ENCODE measurements at regions of chr22 and their contacts with region 1.

Region 1: GRCh38 chr22:38751422-38752346 is 4.1 kb downstream of the SUN2 start:
- DNase-seq: peak; percentile 90
- H3K4me3 Mint-ChIP-seq: peak overlapping the region; percentile 98
- H3K27ac Mint-ChIP-seq: peak overlapping the region; percentile 100
- H3K4me1 Mint-ChIP-seq: peaks cover 51% of the 10 kb centered on the region
- H3K27me3 Mint-ChIP-seq: no peaks in the 10 kb centered on the region

Region 2: GRCh38 chr22:38454353-38455075 is 297.2 kb before region 1 on chr22:
- CTCF ChIA-PET with region 1: no interaction called
- POLR2A ChIA-PET with region 1: no interaction called
- DNase-seq: no peak
- H3K4me3 Mint-ChIP-seq: peak overlapping the region; percentile 70
- H3K27ac Mint-ChIP-seq: peak overlapping the region; percentile 25
- H3K4me1 Mint-ChIP-seq: peaks cover 13% of the 10 kb centered on the region
- H3K27me3 Mint-ChIP-seq: peaks cover 65% of the 10 kb centered on the region

Region 3: DNA sequence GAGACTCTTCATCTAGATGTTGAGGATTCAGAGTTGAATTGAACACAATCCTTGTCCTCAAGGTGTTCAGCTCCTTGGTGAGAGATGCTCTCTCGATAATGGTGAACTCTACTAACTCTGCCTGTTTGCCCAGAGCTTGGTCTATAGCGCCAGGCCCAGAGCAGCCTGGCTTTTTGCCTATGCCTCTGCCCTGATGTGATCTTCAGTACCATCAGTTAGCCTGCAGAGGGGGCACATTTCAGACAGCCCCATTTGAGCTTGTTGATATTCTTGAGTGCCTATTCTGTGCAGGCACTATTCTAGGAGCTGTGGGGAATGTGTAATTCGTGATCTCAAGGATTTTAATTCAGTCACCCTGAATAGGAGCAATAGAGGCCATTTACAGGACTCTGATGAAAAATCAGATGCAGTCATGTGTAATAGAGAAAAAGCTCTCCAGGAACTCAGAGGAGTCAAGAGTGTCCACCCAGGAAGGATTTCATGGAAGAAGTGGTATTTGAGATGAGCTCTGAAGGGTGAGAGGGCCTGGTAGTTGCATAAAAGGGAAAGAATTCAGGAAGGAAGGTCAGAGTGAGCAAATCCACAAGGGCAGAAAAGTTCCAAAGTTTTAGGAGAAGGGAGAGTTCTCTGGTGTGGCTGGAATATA is 26.6 kb before region 1 on chr22:
- CTCF ChIA-PET with region 1: interaction called, 10 read pairs
- POLR2A ChIA-PET with region 1: no interaction called
- DNase-seq: peak; percentile 60
- H3K4me3 Mint-ChIP-seq: no peak overlapping the region
- H3K27ac Mint-ChIP-seq: no peak overlapping the region
- H3K4me1 Mint-ChIP-seq: peaks cover 10% of the 10 kb centered on the region
- H3K27me3 Mint-ChIP-seq: no peaks in the 10 kb centered on the region

Region 4: GRCh38 chr22:38733329-38733723 is 18.4 kb before region 1 on chr22:
- CTCF ChIA-PET with region 1: interaction called, 14 read pairs
- POLR2A ChIA-PET with region 1: interaction called, 3 read pairs
- DNase-seq: peak; percentile 63
- H3K4me3 Mint-ChIP-seq: peak overlapping the region; percentile 34
- H3K27ac Mint-ChIP-seq: peak overlapping the region; percentile 87
- H3K4me1 Mint-ChIP-seq: peaks cover 50% of the 10 kb centered on the region
- H3K27me3 Mint-ChIP-seq: no peaks in the 10 kb centered on the region

Region 5: GRCh38 chr22:38766076-38766777 is 14.5 kb after region 1 on chr22:
- CTCF ChIA-PET with region 1: interaction called, 10 read pairs
- POLR2A ChIA-PET with region 1: interaction called, 3 read pairs
- DNase-seq: peak; percentile 36
- H3K4me3 Mint-ChIP-seq: no peak overlapping the region
- H3K27ac Mint-ChIP-seq: no peak overlapping the region
- H3K4me1 Mint-ChIP-seq: peaks cover 6% of the 10 kb centered on the region
- H3K27me3 Mint-ChIP-seq: no peaks in the 10 kb centered on the region

Region 6: GRCh38 chr22:38802671-38803121 is 51.0 kb after region 1 on chr22:
- CTCF ChIA-PET with region 1: no interaction called
- POLR2A ChIA-PET with region 1: no interaction called
- DNase-seq: no peak
- H3K4me3 Mint-ChIP-seq: no peak overlapping the region
- H3K27ac Mint-ChIP-seq: no peak overlapping the region
- H3K4me1 Mint-ChIP-seq: peaks cover 11% of the 10 kb centered on the region
- H3K27me3 Mint-ChIP-seq: peaks cover 17% of the 10 kb centered on the region